Endothelial cell of umbilical vein (primary cell): ENCODE measurements at regions of chr20 and their contacts with region 1.

Region 1: DNA sequence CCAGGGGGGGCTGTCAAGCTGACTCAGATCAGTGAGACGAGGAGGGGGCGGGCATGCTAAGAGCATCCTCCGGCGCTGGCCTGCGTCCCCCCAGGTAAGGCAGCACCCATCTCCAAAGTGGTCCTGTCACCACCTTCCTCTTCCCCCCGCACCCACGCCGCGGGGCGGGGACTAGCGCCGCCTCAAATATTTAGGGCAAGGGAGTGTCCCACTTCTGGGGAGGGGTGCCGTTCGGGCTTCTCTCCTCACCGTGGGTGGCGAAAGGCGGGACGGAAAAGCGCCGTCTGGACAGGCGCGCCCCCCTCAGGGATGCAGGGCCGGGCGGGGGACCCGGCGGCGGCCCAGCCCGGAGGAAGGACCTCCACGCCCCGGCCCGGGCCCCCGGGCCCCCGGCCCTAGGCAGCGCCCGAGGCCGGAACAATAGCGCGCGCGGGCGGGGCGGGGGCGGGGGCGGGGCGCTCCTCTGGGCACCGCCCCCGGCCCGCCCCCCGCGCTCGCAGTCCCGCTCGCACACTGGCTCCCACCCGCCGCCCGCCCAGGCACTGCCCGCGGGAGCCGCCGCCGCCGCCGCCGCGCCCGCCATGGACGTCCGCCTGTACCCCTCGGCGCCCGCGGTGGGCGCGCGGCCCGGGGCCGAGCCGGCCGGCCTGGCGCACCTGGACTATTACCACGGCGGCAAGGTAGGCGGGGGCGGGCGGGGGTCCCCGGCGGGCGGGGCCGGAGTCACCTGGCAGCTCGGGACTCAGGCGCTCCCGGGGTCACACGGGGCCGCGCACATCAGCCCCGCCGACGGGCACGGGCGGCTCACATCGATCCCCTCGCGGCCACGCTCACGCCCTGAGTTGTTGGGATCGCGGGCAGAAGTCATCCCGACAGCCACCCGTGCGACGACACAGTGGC is at the start of gene TOX2:
- DNase-seq: no peak
- H3K4me3 ChIP-seq: peak within 1 kb of the TSS; percentile 50 to 56 (median 52)
- H3K27ac ChIP-seq: no peak within 1 kb of the TSS
- H3K4me1 ChIP-seq: peaks cover 24% of the 10 kb centered on the region
- H3K27me3 ChIP-seq: peaks cover 0 to 4% of the 10 kb centered on the region in 2 experiments
- CTCF ChIP-seq: no peak
- POLR2A ChIP-seq: no peak
- total RNA-seq, gene TOX2: 18.6 and 25.7 TPM in 2 replicates

Region 2: DNA sequence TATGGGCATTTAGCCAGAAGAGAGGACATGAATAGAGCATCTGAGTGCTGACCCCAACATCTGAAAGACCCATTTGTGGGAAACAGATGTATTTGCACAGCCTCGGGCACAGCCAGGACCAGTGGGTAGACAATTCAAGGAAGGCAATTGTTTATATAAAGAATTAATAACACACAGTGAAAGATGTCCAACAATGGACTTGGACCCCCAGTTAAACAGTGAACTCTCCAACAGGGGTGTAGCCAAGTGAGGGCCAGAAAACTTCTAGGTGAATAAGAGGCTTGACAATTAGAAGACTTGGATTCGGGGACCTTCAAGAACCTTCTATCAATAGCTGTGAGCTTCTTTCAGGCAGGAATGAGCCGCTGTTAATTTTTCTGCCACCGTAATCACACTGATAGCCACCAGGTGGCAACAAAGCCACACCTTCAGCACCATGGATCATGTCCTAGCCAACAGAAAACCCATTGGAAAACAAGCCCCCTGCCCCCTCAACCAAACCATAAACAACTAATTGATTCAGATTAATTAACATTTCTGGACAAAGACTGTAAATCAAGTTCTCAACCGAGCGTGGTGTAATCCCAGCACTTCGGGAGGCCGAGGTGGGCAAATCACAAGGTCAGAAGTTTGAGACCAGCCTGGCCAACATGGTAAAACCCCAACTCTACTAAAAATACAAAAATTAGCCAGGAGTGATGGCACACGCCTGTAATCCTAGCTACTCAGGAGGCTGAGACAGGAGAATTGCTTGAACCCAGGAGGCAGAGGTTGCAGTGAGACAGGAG is 465.6 kb before region 1 on chr20:
- CTCF ChIA-PET with region 1: no interaction called
- POLR2A ChIA-PET with region 1: no interaction called
- dilution Hi-C with region 1: no loop called
- intact Hi-C with region 1: loop called (anchors 2 kb)
- DNase-seq: peak; percentile 78
- H3K4me3 ChIP-seq: no peak overlapping the region
- H3K27ac ChIP-seq: no peak overlapping the region
- H3K4me1 ChIP-seq: peaks cover 7% of the 10 kb centered on the region
- H3K27me3 ChIP-seq: peaks cover 10 to 16% of the 10 kb centered on the region in 2 experiments
- CTCF ChIP-seq: peak; percentile 67 to 68
- POLR2A ChIP-seq: no peak

Region 3: DNA sequence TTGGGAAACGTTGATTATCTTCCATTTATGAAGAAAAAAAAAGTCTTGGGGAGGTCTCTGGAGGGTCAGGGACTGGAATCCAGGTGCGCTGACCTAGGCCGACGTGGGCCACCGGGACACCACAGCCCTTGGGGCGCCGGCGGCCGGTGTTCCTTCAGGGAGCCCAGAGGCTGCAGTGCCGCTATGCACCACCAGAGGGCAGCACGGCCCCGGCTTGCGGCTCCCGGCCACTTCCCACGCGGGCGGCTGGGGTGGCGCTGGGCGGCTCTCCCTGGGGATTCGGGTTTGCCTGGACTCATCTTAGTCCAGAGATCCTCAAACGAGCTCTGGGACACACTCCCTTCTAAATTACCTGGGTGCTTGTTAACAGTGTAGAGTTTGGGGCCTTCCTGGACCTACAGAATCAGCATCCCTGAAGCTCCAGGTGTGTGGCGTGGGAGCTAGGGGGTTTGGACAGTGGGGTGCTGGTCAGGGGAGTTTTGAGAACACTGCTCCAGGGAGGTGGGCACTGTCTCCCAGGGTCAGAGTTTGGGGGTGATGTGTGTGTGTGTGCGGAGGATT is 164.7 kb before region 1 on chr20:
- CTCF ChIA-PET with region 1: interaction called, 62 read pairs
- POLR2A ChIA-PET with region 1: no interaction called
- dilution Hi-C with region 1: loop called (anchors 25 kb)
- intact Hi-C with region 1: loop called (anchors 1 kb)
- DNase-seq: peak; percentile 37
- H3K4me3 ChIP-seq: no peak overlapping the region
- H3K27ac ChIP-seq: no peak overlapping the region
- H3K4me1 ChIP-seq: peaks cover 12% of the 10 kb centered on the region
- H3K27me3 ChIP-seq: no peaks in the 10 kb centered on the region
- CTCF ChIP-seq: peak; percentile 99
- POLR2A ChIP-seq: no peak

Region 4: DNA sequence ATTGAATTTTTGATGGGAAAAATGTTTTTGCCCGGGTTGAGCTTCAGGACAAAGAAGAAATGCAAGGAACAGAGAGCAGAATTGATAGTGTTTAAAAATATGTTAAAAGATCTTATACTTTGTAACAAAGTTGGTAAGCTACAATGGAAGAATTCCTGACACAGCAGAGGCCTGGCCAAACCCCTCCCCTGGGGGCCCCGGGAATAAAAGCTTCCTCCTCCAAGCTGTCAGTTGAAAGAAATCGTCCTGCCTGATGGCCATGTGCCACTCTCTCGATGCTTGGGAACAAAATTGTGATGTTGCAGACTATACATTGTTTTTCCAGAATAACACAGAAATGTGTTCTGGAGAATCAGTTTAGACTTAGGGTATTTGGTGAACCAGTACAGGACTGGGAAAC is 14.1 kb before region 1 on chr20:
- CTCF ChIA-PET with region 1: interaction called, 13 read pairs
- POLR2A ChIA-PET with region 1: no interaction called
- dilution Hi-C with region 1: no loop called
- intact Hi-C with region 1: no loop called
- DNase-seq: no peak
- H3K4me3 ChIP-seq: no peak overlapping the region
- H3K27ac ChIP-seq: no peak overlapping the region
- H3K4me1 ChIP-seq: no peaks in the 10 kb centered on the region
- H3K27me3 ChIP-seq: no peaks in the 10 kb centered on the region
- CTCF ChIP-seq: no peak
- POLR2A ChIP-seq: no peak

Region 5: DNA sequence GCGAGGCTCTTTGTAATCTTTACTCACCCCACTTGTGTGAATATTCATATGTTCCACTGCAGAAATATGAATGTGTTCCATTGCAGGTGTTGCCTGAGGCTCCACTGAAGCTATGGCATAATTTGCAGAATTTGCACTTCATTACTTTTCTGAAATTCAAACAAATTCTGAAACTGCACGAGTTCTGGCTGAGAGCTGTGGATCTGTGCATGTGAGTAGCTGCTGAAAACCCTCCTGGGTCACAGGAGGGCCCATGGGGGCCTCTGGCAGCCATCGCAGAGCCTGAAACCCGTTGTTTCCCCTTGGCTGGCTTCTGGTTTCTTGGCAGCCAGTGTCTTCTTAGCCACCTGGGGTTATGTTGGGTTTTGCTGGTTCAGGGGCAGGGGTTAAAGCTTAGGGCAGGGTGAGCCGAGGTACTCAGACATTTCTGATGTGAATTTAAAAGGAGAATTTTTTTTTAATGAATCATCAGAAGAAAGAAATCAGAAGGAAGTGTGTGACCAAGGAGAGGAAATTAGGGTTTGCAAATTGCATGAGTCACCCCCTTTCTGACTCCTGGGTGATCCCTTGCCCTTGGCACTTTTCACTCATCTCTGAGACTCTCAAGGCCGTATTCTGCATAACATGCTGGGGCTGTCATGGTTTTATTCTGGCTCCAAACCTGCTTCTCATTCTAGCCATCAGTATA is 40.6 kb after region 1 on chr20:
- CTCF ChIA-PET with region 1: interaction called, 12 read pairs
- POLR2A ChIA-PET with region 1: no interaction called
- dilution Hi-C with region 1: no loop called
- intact Hi-C with region 1: loop called (anchors 1 kb)
- DNase-seq: peak; percentile 92
- H3K4me3 ChIP-seq: no peak overlapping the region
- H3K27ac ChIP-seq: peak overlapping the region; percentile 80
- H3K4me1 ChIP-seq: peaks cover 47% of the 10 kb centered on the region
- H3K27me3 ChIP-seq: no peaks in the 10 kb centered on the region
- CTCF ChIP-seq: no peak
- POLR2A ChIP-seq: peak; percentile 41

Region 6: GRCh38 chr20:44018259-44018941 is 103.8 kb after region 1 on chr20:
- CTCF ChIA-PET with region 1: interaction called, 4 read pairs
- POLR2A ChIA-PET with region 1: no interaction called
- dilution Hi-C with region 1: no loop called
- intact Hi-C with region 1: loop called (anchors 1 kb)
- DNase-seq: peak; percentile 84
- H3K4me3 ChIP-seq: no peak overlapping the region
- H3K27ac ChIP-seq: no peak overlapping the region
- H3K4me1 ChIP-seq: peaks cover 39% of the 10 kb centered on the region
- H3K27me3 ChIP-seq: no peaks in the 10 kb centered on the region
- CTCF ChIP-seq: no peak
- POLR2A ChIP-seq: no peak

Region 7: GRCh38 chr20:44050925-44051660 is 136.5 kb after region 1 on chr20:
- CTCF ChIA-PET with region 1: no interaction called
- POLR2A ChIA-PET with region 1: no interaction called
- dilution Hi-C with region 1: no loop called
- intact Hi-C with region 1: no loop called
- DNase-seq: no peak
- H3K4me3 ChIP-seq: no peak overlapping the region
- H3K27ac ChIP-seq: no peak overlapping the region
- H3K4me1 ChIP-seq: no peaks in the 10 kb centered on the region
- H3K27me3 ChIP-seq: no peaks in the 10 kb centered on the region
- CTCF ChIP-seq: no peak
- POLR2A ChIP-seq: no peak